Heart right ventricle (tissue), 16 donors: ENCODE measurements at regions of chr6 and their contacts with region 1.

Region 1: DNA sequence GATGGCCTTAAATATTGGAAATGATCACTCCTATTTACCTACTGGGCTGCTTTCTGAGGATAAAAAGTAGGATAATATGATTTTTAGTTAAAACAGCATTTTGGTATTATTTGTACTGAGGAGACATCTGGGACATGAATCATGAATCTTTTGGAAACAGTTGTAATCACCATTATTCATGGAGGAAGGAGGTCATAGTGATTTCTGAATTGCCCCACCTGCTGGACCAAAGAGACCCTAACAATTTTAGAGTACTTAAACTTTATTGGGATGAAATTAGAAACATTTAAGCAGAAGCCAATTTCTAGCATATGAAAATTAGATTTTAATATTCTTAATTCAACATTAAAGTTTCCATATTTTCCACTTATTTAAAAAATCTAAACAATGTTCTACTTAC is 108.4 kb upstream of the SIM1 start:
- DNase-seq: no peak
- ATAC-seq: no peak
- H3K4me3 ChIP-seq: no peak overlapping the region
- H3K27ac ChIP-seq: no peak overlapping the region
- H3K4me1 ChIP-seq: no peaks in the 10 kb centered on the region
- H3K27me3 ChIP-seq: no peaks in the 10 kb centered on the region
- CTCF ChIP-seq: peak in 3 of 9 donors; percentile 12 to 27 (median 14)

Region 2: GRCh38 chr6:100612094-100612493 is 38.9 kb after region 1 on chr6:
- intact Hi-C with region 1: loop called in 1 of 10 experiments (anchors 2 kb)
- DNase-seq: no peak
- ATAC-seq: no peak
- H3K4me3 ChIP-seq: no peak overlapping the region
- H3K27ac ChIP-seq: no peak overlapping the region
- H3K4me1 ChIP-seq: no peaks in the 10 kb centered on the region
- H3K27me3 ChIP-seq: no peaks in the 10 kb centered on the region
- CTCF ChIP-seq: no peak